PC-9 (cell line): ENCODE measurements at regions of chr1 and their contacts with region 1.

Region 1: DNA sequence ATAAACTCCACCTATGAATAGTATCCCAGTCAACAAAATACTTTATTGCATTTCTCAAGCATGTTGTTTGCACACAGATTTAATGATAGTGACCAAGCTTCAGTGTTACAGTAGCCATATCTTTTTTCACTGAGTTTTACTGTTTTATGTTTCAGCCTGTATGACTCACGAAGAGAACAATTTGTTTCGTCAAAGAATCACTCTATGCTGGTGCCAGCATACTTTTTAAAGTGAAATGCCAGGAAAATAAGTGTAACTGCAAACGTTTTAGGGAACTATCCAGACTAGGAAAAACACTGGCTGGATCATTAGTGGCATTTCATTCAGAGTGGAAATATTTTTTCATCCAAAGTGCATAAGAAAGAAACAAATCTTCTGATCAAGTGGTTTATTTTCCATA is 210.8 kb downstream of the COL11A1 start:
- DNase-seq: peak in 1 of 2 experiments; percentile 56
- H3K4me3 ChIP-seq: no peak overlapping the region
- H3K27ac ChIP-seq: peak overlapping the region; percentile 1; the same call in 1 of the 2 replicates
- H3K4me1 ChIP-seq: peaks cover 7% of the 10 kb centered on the region; the same call in 1 of the 2 replicates
- H3K27me3 ChIP-seq: no peaks in the 10 kb centered on the region
- CTCF ChIP-seq: no peak

Region 2: GRCh38 chr1:102726417-102726816 is 171.1 kb before region 1 on chr1:
- CTCF ChIA-PET with region 1: no interaction called
- POLR2A ChIA-PET with region 1: no interaction called
- intact Hi-C with region 1: no loop called
- DNase-seq: no peak
- H3K4me3 ChIP-seq: no peak overlapping the region
- H3K27ac ChIP-seq: no peak overlapping the region
- H3K4me1 ChIP-seq: no peaks in the 10 kb centered on the region
- H3K27me3 ChIP-seq: no peaks in the 10 kb centered on the region
- CTCF ChIP-seq: no peak

Region 3: DNA sequence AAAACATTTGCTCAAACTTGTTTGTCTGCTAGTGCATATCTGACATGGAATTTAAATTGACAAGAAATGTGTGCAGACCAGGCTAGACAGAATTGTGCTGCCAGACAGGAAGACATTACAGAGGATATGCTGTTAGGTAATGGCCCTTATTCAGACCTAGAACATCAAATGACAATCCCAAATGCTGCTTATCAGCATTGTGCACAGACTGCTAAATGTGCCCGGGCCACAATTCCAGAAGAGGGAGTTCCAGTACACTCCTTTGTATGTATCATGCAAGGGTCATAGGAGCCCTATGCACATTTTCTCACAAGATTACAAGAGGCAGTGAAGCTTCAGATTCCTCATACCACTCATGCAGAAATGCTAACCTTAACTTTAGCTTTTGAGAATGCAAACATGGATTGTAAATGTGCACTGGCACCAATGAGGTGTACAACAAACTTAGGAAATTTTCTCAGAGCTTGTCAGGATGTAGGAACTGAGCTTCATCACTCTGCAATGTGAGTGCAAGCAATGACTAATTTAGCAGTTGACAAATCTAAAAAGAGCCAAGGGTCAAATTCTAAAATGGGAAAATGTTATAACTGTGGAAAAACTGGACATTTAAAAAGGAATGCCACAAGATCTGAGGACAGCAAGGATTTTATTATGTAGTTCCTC is 62.8 kb before region 1 on chr1:
- CTCF ChIA-PET with region 1: no interaction called
- POLR2A ChIA-PET with region 1: interaction called, 4 read pairs
- intact Hi-C with region 1: loop called (anchors 5 kb)
- DNase-seq: peak in 1 of 2 experiments; percentile 91
- H3K4me3 ChIP-seq: no peak overlapping the region
- H3K27ac ChIP-seq: peak overlapping the region; percentile 76
- H3K4me1 ChIP-seq: peaks cover 67% of the 10 kb centered on the region
- H3K27me3 ChIP-seq: no peaks in the 10 kb centered on the region
- CTCF ChIP-seq: no peak